HEK293 (cell line): ENCODE measurements at regions of chr20 and their contacts with region 1.

Region 1: DNA sequence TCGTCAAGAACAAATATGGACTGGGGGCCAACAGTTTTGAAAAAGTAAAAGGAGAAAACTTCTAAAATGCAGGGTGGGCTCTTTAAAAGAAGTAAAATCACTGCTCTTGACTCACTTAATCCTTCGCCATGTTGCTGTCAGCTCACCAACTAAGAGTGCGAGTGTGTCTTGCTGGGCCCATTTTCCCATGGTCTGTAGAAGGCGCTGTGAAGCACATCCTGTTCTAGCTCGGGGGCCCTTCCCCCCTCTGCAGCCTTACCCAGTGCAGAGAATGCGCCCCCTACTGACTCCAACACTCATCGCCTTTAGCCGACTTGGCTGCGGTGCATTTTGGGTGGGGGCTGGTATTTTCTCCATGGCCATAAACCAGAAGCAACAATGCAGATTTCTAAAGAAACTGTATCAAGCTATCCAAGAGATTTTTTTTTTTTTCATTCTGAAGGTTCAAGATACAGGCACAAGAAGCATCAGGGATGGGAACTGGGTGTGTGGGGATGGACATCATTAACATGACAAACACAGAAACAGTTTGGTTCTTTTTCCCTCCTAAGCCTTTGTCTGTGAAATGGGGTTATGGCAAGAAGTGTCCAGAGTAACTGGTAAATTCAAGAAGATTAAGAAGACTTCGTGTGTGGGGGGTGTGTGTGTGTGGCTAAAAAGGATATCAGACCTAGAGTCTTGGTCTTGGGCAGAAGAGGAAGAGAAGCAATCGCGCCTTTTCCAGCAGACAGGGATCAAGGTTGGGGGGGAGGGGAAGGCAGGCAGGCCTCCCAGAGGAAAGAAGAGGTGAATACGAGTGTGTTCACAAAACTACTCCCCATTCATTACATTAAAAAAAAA is 1.7 kb downstream of the ADNP start:
- H3K4me3 ChIP-seq: peak overlapping the region; percentile 98
- H3K27ac ChIP-seq: peak overlapping the region; percentile 58
- H3K4me1 ChIP-seq: no peaks in the 10 kb centered on the region; the same call in 1 of the 2 replicates
- CTCF ChIP-seq: peak; percentile 96

Region 2: GRCh38 chr20:50772420-50773185 is 156.9 kb before region 1 on chr20:
- CTCF ChIA-PET with region 1: no interaction called
- POLR2A ChIA-PET with region 1: no interaction called
- H3K4me3 ChIP-seq: no peak overlapping the region
- H3K27ac ChIP-seq: no peak overlapping the region
- H3K4me1 ChIP-seq: no peaks in the 10 kb centered on the region
- CTCF ChIP-seq: no peak

Region 3: GRCh38 chr20:50815162-50815989 is 114.1 kb before region 1 on chr20:
- CTCF ChIA-PET with region 1: interaction called, 11 read pairs
- POLR2A ChIA-PET with region 1: interaction called, 10 read pairs
- H3K4me3 ChIP-seq: no peak overlapping the region
- H3K27ac ChIP-seq: no peak overlapping the region
- H3K4me1 ChIP-seq: peaks cover 3% of the 10 kb centered on the region; the same call in 1 of the 2 replicates
- CTCF ChIP-seq: no peak

Region 4: GRCh38 chr20:50911716-50912115 is 17.8 kb before region 1 on chr20:
- CTCF ChIA-PET with region 1: interaction called, 24 read pairs
- POLR2A ChIA-PET with region 1: interaction called, 6 read pairs
- H3K4me3 ChIP-seq: no peak overlapping the region
- H3K27ac ChIP-seq: no peak overlapping the region
- H3K4me1 ChIP-seq: peaks cover 27% of the 10 kb centered on the region
- CTCF ChIP-seq: no peak

Region 5: GRCh38 chr20:50953821-50954220 is 24.3 kb after region 1 on chr20:
- CTCF ChIA-PET with region 1: interaction called, 13 read pairs
- POLR2A ChIA-PET with region 1: interaction called, 35 read pairs
- H3K4me3 ChIP-seq: no peak overlapping the region
- H3K27ac ChIP-seq: no peak overlapping the region
- H3K4me1 ChIP-seq: no peaks in the 10 kb centered on the region
- CTCF ChIP-seq: no peak

Region 6: DNA sequence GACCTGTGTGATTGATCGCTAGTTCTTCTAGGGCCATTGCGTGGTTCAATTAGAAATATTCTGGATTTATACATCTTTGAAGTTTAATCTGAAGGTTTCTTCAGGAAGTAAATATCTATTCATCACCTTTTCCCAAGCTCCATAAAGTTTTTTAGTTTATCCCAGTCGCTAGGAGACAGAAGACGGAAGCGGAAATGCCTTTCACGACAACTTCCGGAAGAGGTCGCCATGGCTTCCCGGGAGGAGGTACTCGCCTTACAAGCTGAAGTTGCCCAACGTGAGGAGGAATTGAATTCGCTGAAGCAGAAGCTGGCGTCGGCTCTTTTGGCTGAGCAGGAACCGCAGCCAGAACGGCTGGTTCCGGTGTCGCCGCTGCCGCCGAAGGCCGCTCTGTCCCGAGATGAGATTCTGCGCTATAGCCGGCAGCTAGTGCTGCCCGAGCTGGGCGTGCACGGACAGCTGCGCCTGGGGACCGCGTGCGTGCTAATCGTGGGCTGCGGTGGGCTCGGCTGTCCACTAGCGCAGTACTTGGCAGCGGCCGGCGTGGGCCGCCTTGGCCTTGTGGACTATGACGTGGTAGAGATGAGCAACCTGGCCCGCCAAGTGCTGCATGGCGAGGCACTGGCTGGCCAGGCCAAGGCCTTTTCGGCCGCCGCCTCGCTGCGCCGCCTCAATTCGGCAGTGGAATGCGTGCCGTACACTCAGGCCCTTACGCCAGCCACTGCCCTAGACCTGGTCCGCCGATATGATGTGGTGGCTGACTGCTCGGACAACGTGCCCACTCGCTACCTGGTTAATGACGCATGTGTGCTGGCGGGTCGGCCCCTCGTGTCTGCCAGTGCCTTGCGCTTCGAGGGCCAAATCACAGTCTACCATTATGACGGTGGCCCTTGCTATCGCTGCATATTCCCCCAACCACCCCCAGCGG is 29.4 kb after region 1 on chr20 and contains the start of gene MOCS3:
- CTCF ChIA-PET with region 1: interaction called, 8 read pairs
- POLR2A ChIA-PET with region 1: interaction called, 35 read pairs
- H3K4me3 ChIP-seq: peak within 1 kb of the TSS; percentile 100
- H3K27ac ChIP-seq: peak within 1 kb of the TSS; percentile 87
- H3K4me1 ChIP-seq: peaks cover 2% of the 10 kb centered on the region; the same call in 1 of the 2 replicates
- CTCF ChIP-seq: no peak